ENCODE measurements at regions of chr12 and their contacts with region 1.

Region 1: DNA sequence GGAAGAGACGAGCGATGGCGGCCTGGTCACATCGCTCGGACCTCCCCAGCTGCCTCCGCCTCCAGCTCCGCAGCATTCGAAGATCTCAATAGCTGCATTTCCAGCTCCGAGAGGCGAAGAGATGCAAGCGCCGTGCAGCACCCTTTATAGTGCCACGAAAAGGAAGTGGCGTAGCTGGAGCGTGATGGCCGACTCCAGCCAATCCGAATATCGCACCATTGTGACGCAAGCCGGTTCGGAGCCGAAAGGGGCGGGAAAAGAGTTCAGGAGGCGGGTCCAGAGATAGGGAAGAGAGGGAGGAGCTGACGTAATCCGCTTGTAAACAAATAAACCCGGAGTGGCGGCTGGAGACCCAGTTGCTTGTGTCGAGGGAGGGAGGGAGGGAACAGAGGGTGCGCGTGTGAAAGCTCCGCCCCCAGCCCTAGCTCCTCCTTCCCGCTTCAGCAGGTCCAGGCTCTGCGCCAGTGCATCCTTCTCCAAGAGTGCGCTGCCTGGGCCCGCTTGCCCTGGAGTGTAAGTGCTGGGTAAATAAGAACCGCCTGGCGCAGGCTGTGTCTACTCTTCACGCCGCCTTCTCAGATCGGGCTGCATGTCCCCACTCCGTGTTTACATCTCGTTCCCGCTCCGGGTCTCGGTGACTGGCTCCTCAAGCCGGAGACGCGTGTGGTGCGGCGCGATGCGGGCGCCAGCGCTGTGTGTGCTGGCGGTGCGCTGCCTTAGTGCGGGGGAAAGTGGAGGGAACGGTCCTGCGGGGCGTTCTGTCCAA is at the start of gene BTG1:
- DNase-seq: peak; percentile 99
- ATAC-seq: peak; percentile 78
- H3K4me3 Mint-ChIP-seq: peak within 1 kb of the TSS; percentile 99
- H3K27ac Mint-ChIP-seq: peak within 1 kb of the TSS; percentile 99
- H3K4me1 Mint-ChIP-seq: peaks cover 22% of the 10 kb centered on the region
- H3K27me3 Mint-ChIP-seq: no peaks in the 10 kb centered on the region
- total RNA-seq, gene BTG1: 76.6 to 131 TPM

Region 2: DNA sequence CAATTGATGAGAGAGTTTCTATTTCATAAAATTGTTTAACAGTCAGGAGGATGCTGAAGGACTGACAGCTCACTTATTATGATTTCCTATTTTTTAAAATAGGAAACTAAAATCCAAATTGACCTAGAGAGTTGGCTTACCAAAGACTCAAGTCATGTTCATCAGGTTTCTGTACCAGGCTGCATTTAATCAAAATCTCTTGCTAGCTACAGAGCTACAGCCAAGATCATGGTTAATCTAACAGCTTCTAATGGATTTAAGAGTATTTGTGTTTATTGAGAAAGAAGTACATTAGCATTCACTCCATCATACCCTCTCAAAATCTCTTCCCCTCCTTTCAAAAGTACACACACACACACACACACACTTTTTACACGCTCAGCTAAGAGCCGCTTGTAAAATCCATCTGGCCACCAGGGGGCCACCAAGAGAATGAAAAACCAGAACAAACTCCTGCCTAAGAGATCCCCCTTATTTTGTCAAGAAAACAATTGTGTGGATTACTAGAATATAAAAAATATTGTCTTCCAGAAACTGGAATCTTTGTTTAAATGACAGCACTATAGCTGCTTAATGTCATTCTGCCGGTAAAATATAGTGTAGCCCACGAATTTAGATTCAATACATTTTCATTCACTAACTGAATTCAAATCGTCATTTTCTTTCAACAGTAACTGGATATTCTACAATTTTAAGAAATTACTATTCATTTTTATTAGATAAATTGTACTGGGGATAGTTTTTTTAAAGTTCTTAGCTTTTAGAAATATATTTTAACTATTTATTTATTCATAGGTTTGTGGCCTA is 334.2 kb before region 1 on chr12:
- CTCF ChIA-PET with region 1: interaction called, 9 read pairs
- POLR2A ChIA-PET with region 1: interaction called, 3 read pairs
- intact Hi-C with region 1: loop called (anchors 5 kb)
- DNase-seq: peak; percentile 82
- ATAC-seq: peak; percentile 68
- H3K4me3 Mint-ChIP-seq: no peak overlapping the region
- H3K27ac Mint-ChIP-seq: peak overlapping the region; percentile 8
- H3K4me1 Mint-ChIP-seq: peaks cover 17% of the 10 kb centered on the region
- H3K27me3 Mint-ChIP-seq: no peaks in the 10 kb centered on the region

Region 3: DNA sequence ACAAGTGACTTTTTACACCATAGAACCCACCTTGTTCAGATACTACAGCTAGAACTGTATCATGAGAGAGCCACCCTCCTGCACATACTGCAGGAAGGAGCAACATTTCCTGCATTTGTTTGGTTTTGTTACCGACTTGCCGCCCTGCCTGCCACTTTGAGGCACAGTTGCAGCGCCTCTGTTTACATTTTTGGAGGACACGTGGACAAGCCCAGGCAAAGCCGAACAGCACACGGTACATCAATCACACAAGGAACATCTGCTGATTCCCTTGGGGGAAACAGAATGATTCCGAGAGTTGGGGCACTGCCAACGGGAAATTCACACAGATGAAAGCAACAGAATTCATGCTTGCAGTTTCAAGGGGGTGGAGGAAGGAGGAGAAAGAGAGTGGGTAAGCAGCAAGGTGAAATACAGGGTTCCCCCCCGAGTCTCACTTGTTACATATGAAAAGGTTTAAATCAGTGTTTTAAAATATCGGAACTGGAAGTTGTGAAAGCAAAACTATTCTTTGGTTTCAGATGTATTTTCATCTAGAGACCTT is 111.0 kb before region 1 on chr12:
- CTCF ChIA-PET with region 1: interaction called, 5 read pairs
- POLR2A ChIA-PET with region 1: interaction called, 5 read pairs
- intact Hi-C with region 1: loop called in 1 of 2 experiments (anchors 5 kb)
- DNase-seq: peak; percentile 55
- ATAC-seq: peak; percentile 48
- H3K4me3 Mint-ChIP-seq: peak overlapping the region; percentile 72
- H3K27ac Mint-ChIP-seq: peak overlapping the region; percentile 92
- H3K4me1 Mint-ChIP-seq: peaks cover 83% of the 10 kb centered on the region
- H3K27me3 Mint-ChIP-seq: no peaks in the 10 kb centered on the region

Region 4: GRCh38 chr12:92130999-92131398 is 14.9 kb before region 1 on chr12:
- CTCF ChIA-PET with region 1: interaction called, 10 read pairs
- POLR2A ChIA-PET with region 1: interaction called, 59 read pairs
- intact Hi-C with region 1: loop called (anchors 1 to 2 kb)
- DNase-seq: no peak
- ATAC-seq: peak; percentile 45
- H3K4me3 Mint-ChIP-seq: peak overlapping the region; percentile 66
- H3K27ac Mint-ChIP-seq: peak overlapping the region; percentile 94
- H3K4me1 Mint-ChIP-seq: peaks cover 91% of the 10 kb centered on the region
- H3K27me3 Mint-ChIP-seq: no peaks in the 10 kb centered on the region

Region 5: DNA sequence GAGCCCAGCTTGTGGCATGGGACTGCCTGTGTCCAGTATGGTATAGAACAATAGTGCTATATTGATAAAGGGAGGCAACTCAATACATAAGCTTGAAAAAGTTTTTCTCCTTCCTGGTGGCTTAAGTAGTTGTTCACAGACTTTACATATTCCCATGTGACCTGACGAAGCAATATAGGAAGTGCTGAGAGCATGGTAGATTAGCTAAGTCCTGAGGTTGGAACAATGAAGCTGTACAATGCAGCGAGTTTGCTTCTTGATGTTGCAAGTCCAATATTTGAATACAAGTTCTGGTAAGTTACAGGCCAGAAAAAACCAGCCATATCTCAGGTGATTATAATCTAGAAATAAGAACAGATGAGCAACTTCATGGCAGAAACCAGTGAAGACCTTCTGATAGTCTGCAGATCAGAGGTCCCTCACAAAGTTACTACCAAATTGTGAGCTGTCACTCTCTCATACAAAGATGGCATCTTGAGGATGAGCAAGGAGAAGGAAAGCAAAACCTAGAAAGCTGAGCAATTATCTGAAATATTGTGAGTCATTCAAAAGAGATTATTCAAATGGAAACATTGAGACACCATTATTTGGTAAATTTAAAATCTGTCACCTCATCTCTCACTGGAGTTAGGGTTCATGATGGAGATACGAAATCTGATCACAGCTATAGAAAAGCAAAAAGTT is 72.6 kb after region 1 on chr12:
- CTCF ChIA-PET with region 1: interaction called, 4 read pairs
- POLR2A ChIA-PET with region 1: interaction called, 30 read pairs
- intact Hi-C with region 1: loop called in 1 of 2 experiments (anchors 2 kb)
- DNase-seq: no peak
- ATAC-seq: peak; percentile 96
- H3K4me3 Mint-ChIP-seq: peak overlapping the region; percentile 20
- H3K27ac Mint-ChIP-seq: peak overlapping the region; percentile 84
- H3K4me1 Mint-ChIP-seq: peaks cover 24% of the 10 kb centered on the region
- H3K27me3 Mint-ChIP-seq: no peaks in the 10 kb centered on the region

Region 6: DNA sequence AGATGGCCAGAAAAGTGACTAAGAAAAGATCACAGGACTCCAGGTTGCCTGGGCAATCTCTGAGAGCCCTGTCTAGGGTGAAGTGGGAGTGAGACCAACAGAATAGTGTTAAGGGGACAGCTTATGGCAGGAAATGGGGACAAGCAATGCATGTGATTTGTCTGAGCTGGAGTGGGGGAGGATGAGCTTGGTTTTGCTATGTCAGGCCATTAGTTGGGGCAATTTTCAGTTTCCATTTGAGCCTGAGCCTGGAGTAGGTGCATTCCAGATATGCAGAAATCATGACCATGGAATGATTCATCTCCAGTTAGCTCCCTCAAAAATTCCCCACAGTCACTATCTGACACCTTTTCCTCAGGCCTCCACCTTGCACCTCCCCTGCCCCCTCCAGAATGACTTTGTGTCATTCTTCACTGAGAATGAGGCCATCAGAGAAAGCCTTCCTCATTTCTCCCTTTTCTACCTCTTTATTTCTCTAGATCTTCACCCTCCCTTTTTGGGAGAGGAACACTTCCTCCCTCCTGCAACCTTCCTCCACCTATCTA is 406.0 kb after region 1 on chr12:
- CTCF ChIA-PET with region 1: no interaction called
- POLR2A ChIA-PET with region 1: interaction called, 4 read pairs
- intact Hi-C with region 1: loop called in 1 of 2 experiments (anchors 5 kb)
- DNase-seq: peak; percentile 75
- ATAC-seq: peak; percentile 82
- H3K4me3 Mint-ChIP-seq: no peak overlapping the region
- H3K27ac Mint-ChIP-seq: no peak overlapping the region
- H3K4me1 Mint-ChIP-seq: peaks cover 16% of the 10 kb centered on the region
- H3K27me3 Mint-ChIP-seq: no peaks in the 10 kb centered on the region

Region 7: DNA sequence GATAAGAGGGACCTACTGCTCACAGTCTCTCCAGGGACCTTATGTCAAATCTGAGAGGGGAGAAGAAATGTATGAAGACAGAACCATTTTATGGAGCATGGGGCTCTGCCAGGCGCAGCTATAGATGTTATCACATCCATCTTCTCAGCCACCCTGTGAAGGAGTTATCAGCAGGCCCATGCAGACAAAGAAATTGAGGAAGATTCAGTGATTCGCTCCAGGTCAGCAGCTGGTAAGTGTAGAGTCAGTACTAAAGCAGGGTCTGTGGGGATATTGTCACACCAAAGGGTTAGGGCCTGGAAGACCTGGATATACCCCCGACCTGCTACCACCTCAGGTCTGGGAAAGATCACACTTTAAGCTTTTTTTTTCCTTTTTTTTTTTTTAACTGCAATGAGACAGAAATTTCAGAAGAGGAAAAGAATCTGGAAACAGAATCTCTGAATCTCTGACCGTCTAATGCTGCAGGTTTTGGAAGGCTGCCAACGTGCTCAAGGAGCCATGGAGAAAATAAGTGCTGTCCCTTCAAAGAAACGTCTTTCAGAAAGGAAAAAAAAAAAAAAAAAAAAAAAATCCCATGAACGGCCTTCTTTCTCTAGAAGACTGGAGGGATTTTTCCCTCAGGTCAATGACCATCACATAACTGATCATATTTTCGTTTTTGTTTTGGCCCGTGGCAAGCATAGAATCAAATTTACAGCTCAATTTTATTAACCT is 483.6 kb after region 1 on chr12:
- CTCF ChIA-PET with region 1: no interaction called
- POLR2A ChIA-PET with region 1: no interaction called
- intact Hi-C with region 1: no loop called
- DNase-seq: no peak
- ATAC-seq: no peak
- H3K4me3 Mint-ChIP-seq: no peak overlapping the region
- H3K27ac Mint-ChIP-seq: no peak overlapping the region
- H3K4me1 Mint-ChIP-seq: no peaks in the 10 kb centered on the region
- H3K27me3 Mint-ChIP-seq: no peaks in the 10 kb centered on the region